ENCODE measurements at regions of chr6 and their contacts with region 1.

Region 1: DNA sequence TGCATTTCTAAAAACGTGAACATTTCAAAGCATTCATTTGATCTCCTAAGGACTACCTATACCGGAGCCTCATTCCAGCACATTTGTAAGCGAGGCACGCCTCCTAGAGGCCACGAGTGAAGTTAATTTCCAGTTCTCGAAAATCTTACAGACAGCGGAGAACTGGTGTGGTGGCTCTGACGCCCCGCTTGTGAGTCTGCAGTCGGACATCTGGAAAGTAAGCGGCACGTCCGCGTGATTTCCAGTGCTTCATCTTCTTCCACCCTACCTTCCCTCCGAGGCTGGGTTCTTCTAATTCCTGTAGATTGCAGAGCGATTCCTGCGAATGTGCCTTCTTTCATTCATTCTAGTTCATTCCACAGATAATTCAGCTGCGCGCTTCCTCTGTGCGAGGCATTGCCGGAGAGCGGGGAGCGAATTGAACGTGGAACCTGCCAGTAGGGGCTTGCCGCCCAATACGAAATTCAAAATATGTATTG is 810 bp upstream of the PRIM2 start:
- DNase-seq: peak; percentile 85
- H3K4me3 Mint-ChIP-seq: peak overlapping the region; percentile 93
- H3K27ac Mint-ChIP-seq: peak overlapping the region; percentile 76
- H3K4me1 Mint-ChIP-seq: peaks cover 25% of the 10 kb centered on the region
- H3K27me3 Mint-ChIP-seq: no peaks in the 10 kb centered on the region
- CTCF ChIP-seq: peak; percentile 60

Region 2: GRCh38 chr6:56659721-56660380 is 656.8 kb before region 1 on chr6:
- CTCF ChIA-PET with region 1: no interaction called
- intact Hi-C with region 1: no loop called
- DNase-seq: no peak
- H3K4me3 Mint-ChIP-seq: no peak overlapping the region
- H3K27ac Mint-ChIP-seq: peak overlapping the region; percentile 35
- H3K4me1 Mint-ChIP-seq: peaks cover 67% of the 10 kb centered on the region
- H3K27me3 Mint-ChIP-seq: no peaks in the 10 kb centered on the region
- CTCF ChIP-seq: no peak

Region 3: DNA sequence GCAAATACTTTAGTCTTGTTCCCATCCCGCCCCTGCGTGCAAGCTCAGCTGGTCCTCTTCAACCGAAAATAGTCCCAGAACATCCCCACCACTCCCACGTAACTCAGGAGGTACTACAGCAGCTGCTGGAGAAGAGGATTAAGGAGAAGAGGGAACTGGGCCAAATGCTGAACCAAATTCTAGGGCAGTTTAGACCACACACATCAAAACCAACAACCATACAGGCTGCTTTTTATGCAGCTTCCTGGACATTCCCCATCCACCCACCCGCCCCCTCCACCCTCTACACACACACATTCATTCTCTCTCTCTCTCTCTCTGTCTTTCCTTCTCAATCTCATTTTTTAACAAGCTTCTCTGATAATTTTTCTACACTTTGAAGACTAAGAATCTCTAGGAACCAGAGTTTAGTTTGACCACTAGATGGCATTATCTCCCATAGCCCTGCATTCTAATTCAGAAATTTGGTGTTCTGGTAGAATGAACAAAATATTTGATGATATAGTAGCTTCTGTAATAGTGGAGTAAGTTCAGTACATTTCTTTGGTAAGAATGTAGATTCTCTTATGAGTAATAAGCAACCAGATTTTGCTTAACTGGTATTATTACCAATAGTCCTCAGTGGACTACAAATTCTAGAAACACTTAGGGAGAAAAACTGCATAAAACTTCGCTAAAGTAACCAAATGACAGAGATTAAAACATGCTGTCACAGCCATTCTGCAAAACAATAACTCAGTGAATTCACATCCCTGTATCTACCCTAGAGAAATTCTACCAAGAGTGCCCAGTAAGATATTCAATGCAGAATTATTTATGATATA is 413.8 kb before region 1 on chr6:
- CTCF ChIA-PET with region 1: interaction called, 13 read pairs
- intact Hi-C with region 1: loop called (anchors 1 kb)
- DNase-seq: no peak
- H3K4me3 Mint-ChIP-seq: no peak overlapping the region
- H3K27ac Mint-ChIP-seq: no peak overlapping the region
- H3K4me1 Mint-ChIP-seq: peaks cover 27% of the 10 kb centered on the region
- H3K27me3 Mint-ChIP-seq: no peaks in the 10 kb centered on the region
- CTCF ChIP-seq: peak; percentile 51

Region 4: DNA sequence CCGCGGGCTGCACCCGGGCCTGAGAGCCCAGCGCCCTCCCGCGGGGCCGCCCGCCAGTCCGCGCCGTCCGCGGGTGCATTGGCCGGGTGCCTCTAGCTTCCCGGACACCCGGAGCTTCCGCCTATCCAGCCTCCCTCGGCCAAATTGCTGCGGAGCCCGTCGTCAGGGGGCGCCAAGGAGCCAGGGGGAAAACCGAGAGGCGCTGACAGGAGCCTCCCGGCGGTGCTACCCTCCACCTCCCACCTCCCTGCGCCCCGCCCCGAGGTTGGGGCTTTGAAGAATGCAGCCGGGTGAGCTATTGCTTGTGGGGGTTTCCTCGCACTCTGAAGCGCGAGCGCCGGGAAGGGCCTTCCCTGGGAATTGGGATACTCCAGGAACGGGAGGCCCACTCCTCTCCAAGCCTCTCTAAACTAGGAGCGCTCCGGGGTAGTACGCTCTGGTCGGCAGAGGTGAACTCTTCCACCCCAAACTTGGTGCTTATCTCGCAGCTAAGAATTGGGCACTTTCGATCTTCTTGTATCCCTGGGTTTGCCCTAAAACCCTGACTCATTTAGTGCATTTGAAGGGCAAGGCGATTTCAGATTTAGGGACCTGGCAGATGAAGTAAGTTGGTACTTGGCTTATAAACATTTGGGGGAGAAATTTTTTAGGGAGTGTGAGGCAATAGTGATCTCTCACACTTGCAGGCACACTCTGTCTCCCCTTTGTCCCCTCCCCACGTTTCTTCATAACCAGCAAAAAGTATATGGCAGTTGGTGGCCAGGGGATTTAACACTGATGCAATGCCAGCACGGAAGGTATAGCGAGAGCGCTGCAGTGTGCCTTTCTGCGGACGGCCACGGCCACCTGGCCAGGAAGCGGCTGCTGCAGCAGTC is 361.2 kb before region 1 on chr6:
- CTCF ChIA-PET with region 1: interaction called, 4 read pairs
- intact Hi-C with region 1: loop called (anchors 10 kb)
- DNase-seq: peak; percentile 97
- H3K4me3 Mint-ChIP-seq: peak overlapping the region; percentile 90
- H3K27ac Mint-ChIP-seq: peak overlapping the region; percentile 66
- H3K4me1 Mint-ChIP-seq: no peaks in the 10 kb centered on the region
- H3K27me3 Mint-ChIP-seq: no peaks in the 10 kb centered on the region
- CTCF ChIP-seq: peak; percentile 92

Region 5: DNA sequence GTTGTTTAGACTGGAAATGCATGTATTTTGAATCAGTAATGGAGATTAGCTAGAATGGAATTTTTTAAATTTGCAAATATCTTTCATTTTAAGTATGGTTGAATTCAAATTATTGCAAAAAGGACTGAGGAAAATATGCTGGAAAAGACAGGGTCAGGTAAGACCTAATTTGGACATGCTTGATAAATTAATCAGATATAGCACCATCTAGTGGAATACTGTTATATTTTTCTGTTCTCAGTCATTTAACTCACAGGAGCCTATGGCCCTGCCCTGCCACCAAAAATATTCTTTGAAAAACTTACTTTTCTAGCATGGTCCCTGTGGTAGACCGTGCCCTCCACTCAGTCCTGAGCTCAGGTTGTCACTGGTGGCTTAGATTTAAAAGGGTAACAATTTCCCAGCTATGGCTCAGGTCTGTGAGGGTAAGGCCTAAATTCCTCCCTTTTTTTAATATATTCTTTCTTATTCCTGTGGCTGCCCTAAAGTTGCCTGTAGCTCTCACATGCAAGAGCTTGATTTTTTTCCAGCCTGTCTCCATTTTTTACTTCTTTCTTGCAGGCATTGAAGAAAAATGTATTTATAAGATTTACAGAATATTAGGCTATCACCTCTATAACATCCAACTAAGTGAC is 295.4 kb before region 1 on chr6:
- CTCF ChIA-PET with region 1: no interaction called
- intact Hi-C with region 1: loop called (anchors 10 kb)
- DNase-seq: no peak
- H3K4me3 Mint-ChIP-seq: no peak overlapping the region
- H3K27ac Mint-ChIP-seq: no peak overlapping the region
- H3K4me1 Mint-ChIP-seq: no peaks in the 10 kb centered on the region
- H3K27me3 Mint-ChIP-seq: no peaks in the 10 kb centered on the region
- CTCF ChIP-seq: peak; percentile 47

Region 6: DNA sequence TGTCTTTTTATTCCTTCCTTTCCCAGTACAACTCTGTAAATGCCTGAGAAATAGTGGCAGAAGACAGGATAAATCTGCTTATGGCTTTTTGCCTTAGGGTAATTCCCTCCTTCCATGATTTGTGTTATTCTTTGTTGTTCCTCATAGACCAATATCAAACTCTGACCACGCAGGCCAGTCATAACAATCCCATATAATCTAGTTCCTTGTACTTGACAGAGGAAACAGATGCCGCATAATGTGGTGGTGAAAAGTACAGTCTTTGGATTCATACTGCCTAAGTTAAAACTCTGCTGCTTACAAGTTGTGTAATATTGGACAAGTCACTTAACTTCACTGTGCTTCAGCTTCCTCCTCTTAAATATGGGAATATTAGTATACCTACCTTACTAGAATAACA is 152.7 kb before region 1 on chr6:
- CTCF ChIA-PET with region 1: no interaction called
- intact Hi-C with region 1: no loop called
- DNase-seq: no peak
- H3K4me3 Mint-ChIP-seq: no peak overlapping the region
- H3K27ac Mint-ChIP-seq: no peak overlapping the region
- H3K4me1 Mint-ChIP-seq: no peaks in the 10 kb centered on the region
- H3K27me3 Mint-ChIP-seq: no peaks in the 10 kb centered on the region
- CTCF ChIP-seq: no peak

Region 7: DNA sequence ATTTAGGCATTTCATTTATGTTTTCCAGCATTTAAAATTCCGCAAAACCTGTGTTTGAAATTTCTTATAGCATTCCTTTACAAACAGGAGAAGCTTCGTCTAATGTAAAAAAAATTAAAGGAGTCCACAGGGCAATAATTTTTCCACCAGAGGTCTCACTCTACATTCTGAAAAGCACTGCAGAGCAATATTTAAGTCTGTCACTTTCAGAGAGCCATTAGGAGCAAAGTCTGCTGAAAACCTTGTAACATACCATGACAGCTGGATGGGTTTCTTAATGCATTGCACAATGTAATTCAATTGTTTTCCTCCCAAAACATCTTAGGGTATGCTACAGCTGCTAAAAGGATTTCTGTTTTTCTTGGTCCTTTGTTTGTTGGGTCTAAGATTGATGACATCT is 126.5 kb before region 1 on chr6:
- CTCF ChIA-PET with region 1: interaction called, 8 read pairs
- intact Hi-C with region 1: loop called (anchors 1 kb)
- DNase-seq: no peak
- H3K4me3 Mint-ChIP-seq: no peak overlapping the region
- H3K27ac Mint-ChIP-seq: no peak overlapping the region
- H3K4me1 Mint-ChIP-seq: no peaks in the 10 kb centered on the region
- H3K27me3 Mint-ChIP-seq: no peaks in the 10 kb centered on the region
- CTCF ChIP-seq: no peak

Region 8: GRCh38 chr6:57267586-57268293 is 48.9 kb before region 1 on chr6:
- CTCF ChIA-PET with region 1: no interaction called
- intact Hi-C with region 1: loop called (anchors 1 kb)
- DNase-seq: peak; percentile 68
- H3K4me3 Mint-ChIP-seq: no peak overlapping the region
- H3K27ac Mint-ChIP-seq: no peak overlapping the region
- H3K4me1 Mint-ChIP-seq: no peaks in the 10 kb centered on the region
- H3K27me3 Mint-ChIP-seq: peaks cover 12% of the 10 kb centered on the region
- CTCF ChIP-seq: peak; percentile 31

Measured in Calu3 (cell line).